ENCODE measurements at regions of chr22 and their contacts with region 1.

Region 1: DNA sequence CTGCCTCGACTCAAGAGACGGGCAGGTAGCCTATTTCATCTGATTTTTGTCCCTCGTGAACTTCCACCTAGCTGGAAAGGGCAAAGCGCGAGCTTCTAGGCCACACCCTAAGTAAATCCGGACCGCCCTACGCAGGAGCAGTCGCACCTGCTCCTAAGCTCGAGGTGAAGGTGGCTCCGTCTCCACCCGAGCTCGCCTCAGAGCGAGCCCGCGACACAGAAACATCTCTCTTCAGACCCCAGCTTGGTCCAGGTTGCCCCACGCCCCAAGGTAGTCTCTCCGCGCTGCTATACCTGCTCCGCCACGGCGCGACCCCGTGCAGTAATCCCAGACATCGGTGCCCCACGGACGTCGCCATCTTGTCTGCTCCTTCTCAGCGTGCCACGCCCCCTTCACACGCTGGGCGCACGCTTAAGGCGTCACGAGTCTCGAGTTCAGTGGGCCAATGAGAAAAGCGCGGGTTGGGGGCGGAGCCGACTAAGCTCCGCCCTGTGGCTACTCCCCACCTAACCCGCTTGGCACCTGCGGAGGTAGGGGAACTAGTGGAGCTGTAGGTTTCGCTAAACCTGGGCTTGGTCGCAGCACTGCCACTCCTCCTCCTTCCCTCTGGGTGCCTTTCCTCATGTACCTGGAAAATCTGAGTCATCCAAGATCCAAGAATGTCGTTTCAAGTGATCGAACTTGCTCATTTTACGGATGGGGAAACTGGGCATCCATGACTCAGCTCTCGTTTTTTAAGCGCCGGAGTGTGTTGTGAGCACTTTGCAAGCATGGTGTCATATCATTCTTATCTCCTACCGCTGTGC is at the start of gene PISD:
- DNase-seq: peak; percentile 96 to 97
- H3K4me3 ChIP-seq: peak within 1 kb of the TSS; percentile 38 to 88 (median 78)
- H3K27ac ChIP-seq: peak within 1 kb of the TSS in 2 of 3 donors; percentile 24 to 39
- H3K4me1 ChIP-seq: peaks cover 11 to 13% of the 10 kb centered on the region in 2 donors
- H3K27me3 ChIP-seq: no peaks in the 10 kb centered on the region
- CTCF ChIP-seq: peak in 1 of 6 experiments; percentile 8
- POLR2A ChIP-seq: peak in 1 of 2 donors; percentile 85
- total RNA-seq, gene PISD: 34.5 to 59.0 (median 42.5) TPM

Region 2: GRCh38 chr22:31345331-31346254 is 316.5 kb before region 1 on chr22:
- intact Hi-C with region 1: loop called (anchors 10 kb)
- DNase-seq: peak; percentile 85 to 87
- H3K4me3 ChIP-seq: peak overlapping the region in 2 of 3 donors; percentile 48 to 60
- H3K27ac ChIP-seq: peak overlapping the region; percentile 90 to 98 (median 94)
- H3K4me1 ChIP-seq: peaks cover 48 to 52% of the 10 kb centered on the region in 2 donors
- H3K27me3 ChIP-seq: no peaks in the 10 kb centered on the region
- CTCF ChIP-seq: peak; percentile 62 to 98 (median 90)
- POLR2A ChIP-seq: peak in 1 of 2 donors; percentile 71

Region 3: GRCh38 chr22:31616315-31617001 is 45.6 kb before region 1 on chr22:
- intact Hi-C with region 1: no loop called
- DNase-seq: no peak
- H3K4me3 ChIP-seq: no peak overlapping the region
- H3K27ac ChIP-seq: no peak overlapping the region
- H3K4me1 ChIP-seq: peaks cover 0 to 5% of the 10 kb centered on the region in 2 donors
- H3K27me3 ChIP-seq: no peaks in the 10 kb centered on the region
- CTCF ChIP-seq: no peak
- POLR2A ChIP-seq: no peak

Region 4: GRCh38 chr22:31749636-31750364 is 87.7 kb after region 1 on chr22 and contains the start of gene PRR14L:
- intact Hi-C with region 1: loop called (anchors 10 kb)
- DNase-seq: peak; percentile 99
- H3K4me3 ChIP-seq: peak within 1 kb of the TSS; percentile 52 to 84 (median 81)
- H3K27ac ChIP-seq: peak within 1 kb of the TSS; percentile 55 to 84 (median 62)
- H3K4me1 ChIP-seq: peaks cover 36 to 39% of the 10 kb centered on the region in 2 donors
- H3K27me3 ChIP-seq: no peaks in the 10 kb centered on the region
- CTCF ChIP-seq: peak in 2 of 6 experiments; percentile 7 to 11
- POLR2A ChIP-seq: peak in 1 of 2 donors; percentile 87
- total RNA-seq, gene PRR14L: 18.7 to 38.8 (median 29.4) TPM

Region 5: GRCh38 chr22:31943976-31944699 is 282.1 kb after region 1 on chr22 and contains the start of gene YWHAH:
- intact Hi-C with region 1: loop called (anchors 10 kb)
- DNase-seq: peak; percentile 95 to 96
- H3K4me3 ChIP-seq: peak within 1 kb of the TSS; percentile 61 to 85 (median 73)
- H3K27ac ChIP-seq: peak within 1 kb of the TSS; percentile 88 to 96 (median 92)
- H3K4me1 ChIP-seq: peaks cover 9 to 22% of the 10 kb centered on the region in 2 donors
- H3K27me3 ChIP-seq: no peaks in the 10 kb centered on the region
- CTCF ChIP-seq: peak in 2 of 6 experiments; percentile 7 to 23
- POLR2A ChIP-seq: peak; percentile 96 to 97
- total RNA-seq, gene YWHAH: 93.0 to 111 (median 103) TPM

Region 6: GRCh38 chr22:31970490-31971444 is 308.7 kb after region 1 on chr22:
- intact Hi-C with region 1: loop called (anchors 5 kb)
- DNase-seq: peak; percentile 67 to 69
- H3K4me3 ChIP-seq: peak overlapping the region in 1 of 3 donors; percentile 19
- H3K27ac ChIP-seq: peak overlapping the region in 1 of 3 donors; percentile 48
- H3K4me1 ChIP-seq: peaks cover 5 to 8% of the 10 kb centered on the region in 2 donors
- H3K27me3 ChIP-seq: no peaks in the 10 kb centered on the region
- CTCF ChIP-seq: peak; percentile 26 to 86 (median 78)
- POLR2A ChIP-seq: no peak